ENCODE measurements at regions of chr17 and their contacts with region 1.

Region 1: DNA sequence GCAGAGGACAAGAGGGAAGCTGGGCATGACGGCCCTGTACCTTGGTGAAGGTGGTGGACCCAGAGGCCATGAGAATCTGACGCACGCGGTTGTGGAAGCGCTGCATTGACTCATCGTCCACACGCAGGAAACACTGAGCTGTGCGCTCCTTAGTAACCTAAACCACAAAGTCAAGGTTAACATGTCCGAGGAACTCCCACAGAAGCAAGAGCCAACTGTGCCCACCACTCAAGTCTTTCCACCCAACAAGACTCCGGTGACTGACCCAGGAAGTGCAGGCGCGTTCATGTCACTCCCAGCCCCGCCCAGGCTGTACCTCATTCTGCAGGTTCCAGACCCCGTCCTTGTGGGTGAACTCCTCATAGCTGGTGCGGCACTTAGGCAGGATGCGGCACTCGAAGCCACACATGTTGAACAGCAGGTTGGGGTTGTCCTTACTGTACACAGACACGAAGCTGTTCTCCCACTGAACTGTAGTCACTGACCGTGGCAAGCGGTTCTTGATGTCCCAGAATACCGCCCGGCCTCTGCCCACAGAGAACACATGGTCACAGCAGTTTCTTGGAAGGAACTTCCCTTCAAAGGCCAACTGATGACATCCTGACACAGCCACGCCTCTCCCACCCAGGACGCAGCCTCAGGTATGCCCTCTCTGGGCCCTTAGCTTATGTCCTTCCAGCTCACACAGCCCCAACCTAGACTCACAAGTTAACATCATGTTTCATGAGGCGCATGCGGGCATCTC is 11.5 kb downstream of the PRPF8 start:
- DNase-seq: peak in 1 of 2 donors; percentile 25
- ATAC-seq: no peak
- H3K4me3 ChIP-seq: no peak overlapping the region
- H3K27ac ChIP-seq: peak overlapping the region; percentile 8 to 91 (median 38)
- H3K4me1 ChIP-seq: peaks cover 13 to 25% of the 10 kb centered on the region in 2 donors
- H3K27me3 ChIP-seq: no peaks in the 10 kb centered on the region
- CTCF ChIP-seq: no peak
- POLR2A ChIP-seq: no peak

Region 2: DNA sequence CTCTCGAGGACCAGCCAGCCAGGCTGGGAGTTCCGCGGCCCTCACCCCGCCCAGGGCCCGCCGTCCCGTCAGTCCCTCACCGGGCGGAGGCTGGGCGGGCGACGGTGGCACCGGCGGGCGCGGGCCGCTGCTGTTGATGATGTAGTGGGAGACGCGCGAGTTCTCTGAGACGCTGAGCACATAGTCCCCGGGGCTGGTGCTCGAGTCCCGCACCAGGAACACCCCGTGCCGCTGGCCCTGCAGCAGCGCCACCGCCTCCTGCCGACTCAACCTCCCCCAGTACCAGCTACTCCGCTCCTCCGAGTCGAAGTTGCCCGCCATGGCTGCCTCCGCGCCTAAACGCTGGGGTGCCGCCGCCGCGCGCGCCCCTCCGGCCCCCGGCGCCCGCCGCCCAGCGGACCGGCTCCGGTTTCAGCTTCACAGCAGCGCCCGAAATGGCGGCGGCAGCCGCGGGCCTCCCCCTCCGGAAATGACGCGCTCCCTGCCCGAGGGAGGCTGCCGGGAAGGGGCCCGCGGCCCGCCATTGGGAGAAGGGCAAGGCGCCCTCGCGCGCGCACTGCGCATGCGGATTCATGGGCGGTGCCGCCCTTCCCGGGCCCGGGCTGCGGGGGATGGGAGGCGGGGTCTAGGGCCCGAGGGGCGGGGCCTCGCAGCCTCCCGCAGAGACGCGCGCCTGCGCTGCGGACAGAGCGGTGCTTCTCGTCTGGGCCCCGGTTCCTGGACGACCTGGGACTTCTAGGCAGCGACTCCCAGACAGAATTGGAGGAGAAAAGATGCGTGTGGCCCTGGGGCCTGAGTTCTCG is 217.2 kb before region 1 on chr17 and contains the start of gene CRK:
- in situ Hi-C with region 1: no loop called
- intact Hi-C with region 1: no loop called
- DNase-seq: peak; percentile 94
- ATAC-seq: peak; percentile 74 to 75
- H3K4me3 ChIP-seq: peak within 1 kb of the TSS; percentile 76 to 92 (median 84)
- H3K27ac ChIP-seq: peak within 1 kb of the TSS; percentile 94 to 99 (median 96)
- H3K4me1 ChIP-seq: peaks cover 47 to 52% of the 10 kb centered on the region in 2 donors
- H3K27me3 ChIP-seq: no peaks in the 10 kb centered on the region
- CTCF ChIP-seq: no peak
- POLR2A ChIP-seq: peak; percentile 100
- total RNA-seq, gene CRK: 48.6 to 64.6 (median 56.7) TPM

Region 3: GRCh38 chr17:1716076-1716995 is 43.1 kb after region 1 on chr17:
- in situ Hi-C with region 1: no loop called
- intact Hi-C with region 1: loop called (anchors 1 kb)
- DNase-seq: peak; percentile 100
- ATAC-seq: peak; percentile 47 to 59
- H3K4me3 ChIP-seq: peak overlapping the region; percentile 91 to 95 (median 94)
- H3K27ac ChIP-seq: peak overlapping the region; percentile 99 to 100 (median 100)
- H3K4me1 ChIP-seq: peaks cover 52 to 55% of the 10 kb centered on the region in 2 donors
- H3K27me3 ChIP-seq: no peaks in the 10 kb centered on the region
- CTCF ChIP-seq: no peak
- POLR2A ChIP-seq: peak; percentile 99 to 100

Measured in gastrocnemius medialis (tissue), 4 donors.